ENCODE measurements at regions of chr9 and their contacts with region 1.

Region 1: GRCh38 chr9:130172161-130172857 is at the start of gene NCS1:
- DNase-seq: peak in 1 of 2 donors; percentile 89
- H3K4me3 ChIP-seq: peak within 1 kb of the TSS; percentile 72 to 97
- H3K27ac ChIP-seq: peak within 1 kb of the TSS; percentile 90 to 97
- H3K4me1 ChIP-seq: peaks cover 4 to 25% of the 10 kb centered on the region in 2 donors
- H3K27me3 ChIP-seq: no peaks in the 10 kb centered on the region
- CTCF ChIP-seq: no peak
- total RNA-seq, gene NCS1: 34.7 TPM

Region 2: DNA sequence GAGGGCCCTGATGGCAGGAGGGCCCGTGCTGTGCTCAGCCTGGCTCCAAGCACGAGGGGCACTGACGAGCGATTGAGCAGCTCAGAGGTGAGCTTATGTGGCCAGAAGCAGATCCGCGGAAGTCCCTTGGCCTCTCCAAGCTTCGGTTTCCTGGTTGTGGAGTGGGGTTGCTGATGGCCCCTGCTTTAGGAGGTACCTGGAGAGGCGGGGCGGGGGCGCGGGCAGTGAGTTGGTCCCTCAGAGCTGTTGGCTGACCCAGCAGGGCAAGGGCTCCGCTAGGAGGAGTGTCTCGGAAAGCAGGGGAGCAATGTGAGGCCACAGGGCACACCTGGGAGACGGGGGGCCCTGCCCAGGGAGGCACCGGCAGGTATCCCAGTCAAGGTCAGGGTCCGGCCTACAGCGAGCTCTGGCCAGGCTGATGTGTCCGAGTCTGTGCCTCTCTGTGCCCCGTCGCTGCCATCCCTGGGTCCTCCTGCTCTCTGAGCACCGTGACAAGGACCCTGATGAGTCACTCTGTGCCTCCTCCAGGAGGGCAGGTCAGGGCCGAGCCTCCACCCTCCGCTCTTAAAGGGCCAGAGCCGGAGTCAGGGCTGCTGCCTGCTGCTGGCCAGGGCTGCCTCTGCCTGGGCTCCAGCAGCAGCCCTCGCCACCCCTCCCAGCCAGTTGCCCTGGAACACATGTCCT is 14.7 kb after region 1 on chr9:
- intact Hi-C with region 1: loop called (anchors 2 kb)
- DNase-seq: peak in 1 of 2 donors; percentile 85
- H3K4me3 ChIP-seq: peak overlapping the region; percentile 47 to 59
- H3K27ac ChIP-seq: peak overlapping the region; percentile 89 to 90
- H3K4me1 ChIP-seq: peaks cover 38 to 74% of the 10 kb centered on the region in 2 donors
- H3K27me3 ChIP-seq: no peaks in the 10 kb centered on the region
- CTCF ChIP-seq: no peak

Region 3: GRCh38 chr9:130197888-130198287 is 25.6 kb after region 1 on chr9:
- intact Hi-C with region 1: loop called (anchors 1 kb)
- DNase-seq: no peak
- H3K4me3 ChIP-seq: no peak overlapping the region
- H3K27ac ChIP-seq: peak overlapping the region; percentile 71
- H3K4me1 ChIP-seq: peaks cover 18 to 68% of the 10 kb centered on the region in 2 donors
- H3K27me3 ChIP-seq: no peaks in the 10 kb centered on the region
- CTCF ChIP-seq: no peak